Activated CD4-positive, alpha-beta memory T cell treated with anti-CD3 and anti-CD28 coated beads for 36 hours (primary cell): ENCODE measurements at regions of chr12 and their contacts with region 1.

Region 1: GRCh38 chr12:9741726-9742125 is 8.8 kb upstream of the CLECL1 start:
- DNase-seq: peak; percentile 90
- H3K4me3 Mint-ChIP-seq: peak overlapping the region; percentile 74
- H3K27ac Mint-ChIP-seq: peak overlapping the region; percentile 79
- H3K4me1 Mint-ChIP-seq: peaks cover 69% of the 10 kb centered on the region
- H3K27me3 Mint-ChIP-seq: no peaks in the 10 kb centered on the region

Region 2: GRCh38 chr12:9647825-9648700 is 93.7 kb before region 1 on chr12:
- CTCF ChIA-PET with region 1: interaction called, 4 read pairs
- POLR2A ChIA-PET with region 1: interaction called, 5 read pairs
- intact Hi-C with region 1: loop called (anchors 1 kb)
- DNase-seq: peak; percentile 96
- H3K4me3 Mint-ChIP-seq: peak overlapping the region; percentile 85
- H3K27ac Mint-ChIP-seq: peak overlapping the region; percentile 97
- H3K4me1 Mint-ChIP-seq: peaks cover 53% of the 10 kb centered on the region
- H3K27me3 Mint-ChIP-seq: peaks cover 2% of the 10 kb centered on the region

Region 3: GRCh38 chr12:9721394-9722092 is 20.2 kb before region 1 on chr12:
- CTCF ChIA-PET with region 1: interaction called, 11 read pairs
- POLR2A ChIA-PET with region 1: no interaction called
- intact Hi-C with region 1: no loop called
- DNase-seq: no peak
- H3K4me3 Mint-ChIP-seq: no peak overlapping the region
- H3K27ac Mint-ChIP-seq: no peak overlapping the region
- H3K4me1 Mint-ChIP-seq: peaks cover 26% of the 10 kb centered on the region
- H3K27me3 Mint-ChIP-seq: no peaks in the 10 kb centered on the region

Region 4: DNA sequence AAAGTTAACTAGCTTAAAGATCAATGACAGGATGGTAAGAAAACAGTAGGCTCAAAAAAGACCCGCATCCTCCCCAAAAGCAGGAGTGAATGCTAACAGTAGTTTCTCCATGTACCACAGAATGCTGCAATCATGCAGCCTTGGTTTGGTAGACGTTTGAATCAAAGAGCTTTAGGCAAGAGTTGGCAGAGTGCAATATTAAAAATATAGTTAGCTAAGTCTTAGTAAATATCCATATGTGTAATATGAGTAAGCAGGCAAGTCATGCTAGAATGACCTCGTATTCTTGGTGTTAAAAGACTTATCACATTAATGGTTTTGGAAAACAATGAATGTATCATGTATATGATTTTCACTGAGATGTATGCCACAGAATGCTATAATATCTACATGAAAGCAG is 66.8 kb after region 1 on chr12:
- CTCF ChIA-PET with region 1: interaction called, 624 read pairs
- POLR2A ChIA-PET with region 1: no interaction called
- intact Hi-C with region 1: no loop called
- DNase-seq: no peak
- H3K4me3 Mint-ChIP-seq: no peak overlapping the region
- H3K27ac Mint-ChIP-seq: no peak overlapping the region
- H3K4me1 Mint-ChIP-seq: peaks cover 8% of the 10 kb centered on the region
- H3K27me3 Mint-ChIP-seq: peaks cover 17% of the 10 kb centered on the region

Region 5: DNA sequence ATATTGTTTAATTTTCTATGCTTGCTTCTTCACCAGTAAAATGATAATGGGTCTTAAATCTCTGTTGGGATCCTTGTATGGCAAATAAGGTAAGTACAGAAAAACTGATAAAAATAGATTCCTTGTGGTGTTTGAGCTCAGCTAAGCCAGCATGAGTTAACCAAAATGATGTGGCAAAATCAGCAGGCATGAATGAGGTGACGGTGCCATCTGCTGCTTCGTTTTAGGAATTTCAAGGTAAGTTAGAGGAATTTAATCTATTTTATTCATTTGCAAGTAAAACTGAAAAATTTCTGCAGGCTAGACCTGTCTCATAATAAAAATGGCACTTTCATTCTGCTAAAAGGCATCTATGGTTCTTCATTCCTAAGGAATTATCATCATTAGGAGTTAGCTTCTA is 398.3 kb after region 1 on chr12:
- CTCF ChIA-PET with region 1: interaction called, 14 read pairs
- POLR2A ChIA-PET with region 1: no interaction called
- intact Hi-C with region 1: no loop called
- DNase-seq: peak; percentile 66
- H3K4me3 Mint-ChIP-seq: no peak overlapping the region
- H3K27ac Mint-ChIP-seq: no peak overlapping the region
- H3K4me1 Mint-ChIP-seq: no peaks in the 10 kb centered on the region
- H3K27me3 Mint-ChIP-seq: peaks cover 8% of the 10 kb centered on the region

Region 6: DNA sequence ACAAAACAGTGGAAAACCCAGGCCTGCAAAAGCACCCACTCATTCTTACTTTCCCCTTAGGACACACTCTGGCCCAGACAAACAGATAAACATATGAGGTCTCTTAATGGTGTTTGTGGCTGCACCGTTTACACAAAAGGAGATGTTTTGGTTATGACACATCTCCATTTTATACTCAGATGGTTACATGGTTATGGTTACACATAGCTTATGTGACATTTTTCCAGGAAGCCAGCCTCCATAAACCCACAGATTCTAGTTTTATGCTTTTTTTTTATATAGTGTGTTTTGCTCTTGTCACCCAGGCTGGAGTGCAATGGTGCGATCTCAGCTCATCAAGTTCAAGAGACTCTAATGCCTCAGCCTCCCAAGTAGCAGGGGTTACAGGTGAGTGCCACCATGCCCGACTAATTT is 562.4 kb after region 1 on chr12:
- CTCF ChIA-PET with region 1: no interaction called
- POLR2A ChIA-PET with region 1: no interaction called
- intact Hi-C with region 1: loop called (anchors 5 kb)
- DNase-seq: peak; percentile 65
- H3K4me3 Mint-ChIP-seq: no peak overlapping the region
- H3K27ac Mint-ChIP-seq: peak overlapping the region; percentile 46
- H3K4me1 Mint-ChIP-seq: peaks cover 44% of the 10 kb centered on the region
- H3K27me3 Mint-ChIP-seq: peaks cover 21% of the 10 kb centered on the region